Activated CD4-positive, alpha-beta T cell treated with anti-CD3 and anti-CD28 coated beads for 36 hours (primary cell): ENCODE measurements at regions of chr12 and their contacts with region 1.

Region 1: GRCh38 chr12:68831272-68831671 is 23.3 kb downstream of the MDM2 start:
- DNase-seq: no peak
- ATAC-seq: no peak
- H3K4me3 Mint-ChIP-seq: no peak overlapping the region
- H3K27ac Mint-ChIP-seq: no peak overlapping the region
- H3K4me1 Mint-ChIP-seq: peaks cover 19% of the 10 kb centered on the region
- H3K27me3 Mint-ChIP-seq: no peaks in the 10 kb centered on the region

Region 2: GRCh38 chr12:68815232-68815927 is 15.9 kb before region 1 on chr12:
- CTCF ChIA-PET with region 1: interaction called, 27 read pairs
- POLR2A ChIA-PET with region 1: interaction called, 3 read pairs
- intact Hi-C with region 1: no loop called
- DNase-seq: no peak
- ATAC-seq: no peak
- H3K4me3 Mint-ChIP-seq: no peak overlapping the region
- H3K27ac Mint-ChIP-seq: peak overlapping the region; percentile 48
- H3K4me1 Mint-ChIP-seq: peaks cover 41% of the 10 kb centered on the region
- H3K27me3 Mint-ChIP-seq: no peaks in the 10 kb centered on the region

Region 3: DNA sequence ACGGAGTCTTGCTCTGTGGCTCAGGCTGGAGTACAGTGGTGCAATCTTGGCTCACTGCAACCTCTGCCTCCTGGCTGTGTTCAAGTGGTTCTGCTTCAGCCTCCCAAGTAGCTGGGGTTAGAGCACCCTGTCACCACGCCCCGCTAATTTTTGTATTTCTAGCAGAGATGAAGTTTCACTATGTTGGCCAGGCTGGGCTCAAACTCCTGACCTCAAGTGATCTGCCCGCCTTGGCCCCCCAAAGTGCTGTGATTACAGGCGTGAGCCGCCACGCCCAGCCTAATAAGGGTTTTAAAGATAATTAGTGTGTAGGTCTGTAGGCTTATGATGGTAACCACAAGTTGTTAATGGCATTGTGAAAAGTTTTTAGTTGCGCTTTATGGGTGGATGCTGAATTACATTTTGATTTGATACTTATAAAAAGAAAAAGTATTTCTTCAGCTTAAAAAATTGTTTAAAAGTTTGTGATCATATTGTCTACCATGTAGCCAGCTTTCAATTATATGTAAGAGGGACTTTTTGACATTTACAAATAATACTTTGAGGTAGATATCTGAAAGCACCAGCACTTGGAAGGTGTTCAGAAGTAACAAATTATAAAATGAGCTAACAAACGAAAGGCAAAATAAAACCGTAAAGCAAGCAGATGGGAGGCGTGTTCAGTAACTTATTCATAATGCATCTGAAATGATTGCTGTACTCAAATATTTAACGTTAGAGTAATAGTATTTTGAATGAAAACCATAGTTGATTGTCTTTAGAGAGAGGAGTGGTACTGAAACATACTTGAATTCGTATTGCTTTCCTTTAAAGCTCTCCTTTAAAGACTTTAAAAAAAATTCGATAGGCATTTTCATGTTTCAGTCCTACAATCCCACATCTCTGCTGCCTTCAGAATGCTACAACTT is 13.8 kb after region 1 on chr12:
- CTCF ChIA-PET with region 1: interaction called, 42 read pairs
- POLR2A ChIA-PET with region 1: interaction called, 3 read pairs
- intact Hi-C with region 1: loop called in 1 of 2 experiments (anchors 1 kb)
- DNase-seq: no peak
- ATAC-seq: no peak
- H3K4me3 Mint-ChIP-seq: no peak overlapping the region
- H3K27ac Mint-ChIP-seq: no peak overlapping the region
- H3K4me1 Mint-ChIP-seq: no peaks in the 10 kb centered on the region
- H3K27me3 Mint-ChIP-seq: no peaks in the 10 kb centered on the region

Region 4: DNA sequence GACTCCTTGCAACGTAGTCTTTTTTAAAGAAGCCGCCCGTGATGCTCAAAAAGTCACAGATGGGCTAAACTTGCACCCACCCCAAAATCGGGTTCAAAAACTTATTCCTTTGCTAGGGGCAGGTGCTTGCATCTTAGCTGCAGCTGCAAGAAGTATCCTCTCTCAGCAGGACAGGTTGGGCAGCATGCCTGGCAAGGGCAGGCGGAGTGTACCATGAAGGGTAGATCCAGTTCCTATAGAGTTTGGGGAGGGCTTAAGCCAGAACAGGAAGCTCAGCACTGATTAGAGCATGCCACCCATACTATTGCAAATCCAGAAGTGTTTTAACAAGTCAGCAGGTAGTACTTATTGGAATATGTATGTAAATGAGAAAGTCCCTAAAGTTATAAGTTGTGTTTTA is 53.0 kb after region 1 on chr12:
- CTCF ChIA-PET with region 1: no interaction called
- POLR2A ChIA-PET with region 1: no interaction called
- intact Hi-C with region 1: no loop called
- DNase-seq: no peak
- ATAC-seq: no peak
- H3K4me3 Mint-ChIP-seq: no peak overlapping the region
- H3K27ac Mint-ChIP-seq: no peak overlapping the region
- H3K4me1 Mint-ChIP-seq: peaks cover 11% of the 10 kb centered on the region
- H3K27me3 Mint-ChIP-seq: peaks cover 4% of the 10 kb centered on the region

Region 5: GRCh38 chr12:69108037-69108645 is 276.9 kb after region 1 on chr12:
- CTCF ChIA-PET with region 1: no interaction called
- POLR2A ChIA-PET with region 1: no interaction called
- intact Hi-C with region 1: no loop called
- DNase-seq: no peak
- ATAC-seq: no peak
- H3K4me3 Mint-ChIP-seq: no peak overlapping the region
- H3K27ac Mint-ChIP-seq: no peak overlapping the region
- H3K4me1 Mint-ChIP-seq: no peaks in the 10 kb centered on the region
- H3K27me3 Mint-ChIP-seq: no peaks in the 10 kb centered on the region

Region 6: GRCh38 chr12:69553627-69554248 is 722.5 kb after region 1 on chr12:
- CTCF ChIA-PET with region 1: no interaction called
- POLR2A ChIA-PET with region 1: no interaction called
- intact Hi-C with region 1: no loop called
- DNase-seq: no peak
- ATAC-seq: no peak
- H3K4me3 Mint-ChIP-seq: no peak overlapping the region
- H3K27ac Mint-ChIP-seq: no peak overlapping the region
- H3K4me1 Mint-ChIP-seq: peaks cover 5% of the 10 kb centered on the region
- H3K27me3 Mint-ChIP-seq: no peaks in the 10 kb centered on the region